ENCODE measurements at regions of chr7 and their contacts with region 1.

Region 1: GRCh38 chr7:28096713-28097112 is 83.9 kb downstream of the JAZF1 start:
- DNase-seq: no peak
- ATAC-seq: peak; percentile 42
- H3K4me3 Mint-ChIP-seq: no peak overlapping the region
- H3K27ac Mint-ChIP-seq: no peak overlapping the region
- H3K4me1 Mint-ChIP-seq: no peaks in the 10 kb centered on the region
- H3K27me3 Mint-ChIP-seq: no peaks in the 10 kb centered on the region

Region 2: DNA sequence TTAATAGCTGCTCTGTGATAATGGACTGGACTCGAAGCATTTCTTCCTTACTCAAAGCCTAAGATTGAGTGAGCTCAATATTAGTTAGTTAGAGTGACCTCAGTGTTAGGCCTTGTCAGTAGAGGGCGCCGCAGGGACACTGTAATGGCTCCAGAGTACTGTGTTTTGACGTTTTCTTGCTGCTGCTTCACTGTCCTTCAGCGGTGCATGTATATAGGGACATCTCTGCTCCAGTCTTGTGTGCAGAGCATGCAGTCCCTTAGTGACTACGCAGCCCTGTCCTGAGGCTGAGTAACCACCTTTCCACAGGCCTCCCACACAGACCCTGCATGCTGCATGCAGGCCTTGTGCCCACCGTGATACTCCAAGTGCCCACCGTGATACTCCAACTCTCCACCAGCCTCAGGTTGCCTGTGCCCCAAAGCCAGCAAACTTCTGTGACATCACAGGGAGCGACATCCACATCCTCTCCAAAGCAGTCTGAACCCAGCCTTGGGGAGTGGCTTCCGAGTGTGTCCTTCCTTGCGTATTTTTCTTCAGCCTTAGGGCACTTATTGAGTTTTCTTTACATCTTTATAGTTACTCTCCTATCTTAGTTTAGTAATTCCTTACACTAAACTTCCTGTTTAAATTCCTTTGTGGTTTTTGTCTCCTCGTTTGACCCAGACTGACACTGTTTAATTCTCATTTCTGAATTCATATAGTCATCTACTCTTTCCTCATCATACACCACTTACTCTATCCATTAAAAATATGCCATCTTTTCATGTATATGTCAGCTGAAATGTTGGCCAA is 34.3 kb before region 1 on chr7:
- CTCF ChIA-PET with region 1: interaction called, 20 read pairs
- DNase-seq: peak; percentile 69
- ATAC-seq: peak; percentile 80
- H3K4me3 Mint-ChIP-seq: no peak overlapping the region
- H3K27ac Mint-ChIP-seq: no peak overlapping the region
- H3K4me1 Mint-ChIP-seq: peaks cover 3% of the 10 kb centered on the region
- H3K27me3 Mint-ChIP-seq: peaks cover 12% of the 10 kb centered on the region

Region 3: DNA sequence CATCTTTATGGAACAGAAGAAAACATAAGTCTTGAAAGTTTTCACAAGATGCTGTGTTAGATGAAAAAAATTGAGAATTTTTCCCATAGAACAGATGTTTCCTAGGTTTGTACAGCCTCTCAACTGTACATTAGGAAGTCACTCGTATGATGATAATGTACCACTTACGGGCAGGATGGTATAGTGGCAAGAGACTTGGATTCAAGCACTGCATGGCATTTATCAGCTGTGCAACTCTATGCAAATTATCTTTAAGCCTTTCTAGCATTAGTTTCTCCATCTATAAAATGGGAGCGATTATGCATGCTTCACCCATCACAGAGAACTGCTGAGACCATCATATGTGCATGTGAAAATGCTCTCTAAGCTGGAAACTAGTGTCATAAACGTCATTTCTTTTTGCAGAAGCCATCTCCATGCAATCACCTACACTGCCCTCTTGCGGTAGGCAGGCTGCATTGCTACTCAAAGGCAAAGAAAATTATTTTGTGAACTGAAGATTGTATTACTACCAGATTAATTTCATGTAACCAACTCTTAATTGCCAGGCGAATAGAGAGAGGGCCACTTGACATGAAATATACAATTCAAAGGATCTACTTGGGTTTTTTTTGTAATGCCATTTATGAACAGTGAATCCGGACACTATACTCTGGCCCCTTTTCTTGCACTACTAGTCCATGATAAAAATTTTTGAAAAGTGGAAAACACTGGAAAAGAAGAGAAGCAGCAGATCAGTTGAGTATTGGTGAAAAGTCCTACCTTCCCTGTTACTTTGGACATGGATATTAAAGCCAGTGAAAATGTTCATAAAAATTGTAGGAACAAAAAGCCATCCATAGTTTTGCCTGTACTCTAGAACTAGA is 18.4 kb before region 1 on chr7:
- CTCF ChIA-PET with region 1: interaction called, 45 read pairs
- DNase-seq: peak; percentile 60
- ATAC-seq: peak; percentile 45
- H3K4me3 Mint-ChIP-seq: no peak overlapping the region
- H3K27ac Mint-ChIP-seq: no peak overlapping the region
- H3K4me1 Mint-ChIP-seq: peaks cover 5% of the 10 kb centered on the region
- H3K27me3 Mint-ChIP-seq: no peaks in the 10 kb centered on the region

Region 4: DNA sequence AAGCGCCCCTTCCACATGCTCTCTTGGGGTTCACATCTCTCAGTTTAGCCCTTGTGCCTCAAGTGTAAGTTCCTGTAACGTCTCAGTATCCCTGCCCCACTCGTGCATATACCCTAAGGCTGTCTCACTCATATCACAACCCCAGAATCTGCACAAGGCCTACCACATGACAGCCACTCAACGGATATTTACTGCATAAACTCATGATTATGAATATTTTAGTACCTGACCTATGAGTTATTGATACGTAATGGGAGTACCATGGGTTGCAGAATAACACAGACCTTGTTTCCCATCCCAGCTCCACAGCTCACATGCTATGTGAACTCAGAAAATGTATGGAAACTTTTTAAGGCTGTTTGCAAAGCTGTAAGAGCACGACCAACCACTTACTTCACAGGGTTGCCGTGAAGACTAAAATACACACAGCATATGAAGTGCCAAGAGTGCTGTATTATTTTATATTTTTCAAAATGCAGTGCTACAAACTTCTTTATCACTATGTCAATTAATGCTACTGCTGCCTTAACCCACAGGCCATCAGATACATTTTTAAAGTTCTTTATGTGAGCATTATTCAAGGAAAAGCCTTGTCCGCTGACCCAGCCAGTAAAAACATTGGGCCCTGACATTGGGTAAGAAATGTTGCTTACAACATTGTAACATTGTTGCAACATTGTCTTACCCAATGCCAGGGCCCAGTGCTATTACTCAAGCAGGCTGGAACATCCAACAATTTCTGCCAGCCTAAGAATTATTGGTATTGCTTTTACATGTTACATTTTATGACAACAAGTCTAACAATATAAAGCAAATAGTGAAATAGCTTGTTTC is 13.3 kb before region 1 on chr7:
- CTCF ChIA-PET with region 1: interaction called, 45 read pairs
- DNase-seq: no peak
- ATAC-seq: no peak
- H3K4me3 Mint-ChIP-seq: no peak overlapping the region
- H3K27ac Mint-ChIP-seq: no peak overlapping the region
- H3K4me1 Mint-ChIP-seq: peaks cover 1% of the 10 kb centered on the region
- H3K27me3 Mint-ChIP-seq: no peaks in the 10 kb centered on the region

Region 5: GRCh38 chr7:28258240-28258639 is 161.5 kb after region 1 on chr7:
- CTCF ChIA-PET with region 1: no interaction called
- DNase-seq: no peak
- ATAC-seq: no peak
- H3K4me3 Mint-ChIP-seq: no peak overlapping the region
- H3K27ac Mint-ChIP-seq: no peak overlapping the region
- H3K4me1 Mint-ChIP-seq: no peaks in the 10 kb centered on the region
- H3K27me3 Mint-ChIP-seq: peaks cover 42% of the 10 kb centered on the region